Brain microvascular endothelial cell (primary cell): ENCODE measurements at regions of chr1 and their contacts with region 1.

Region 1: GRCh38 chr1:84936116-84936810 is 43.3 kb upstream of the LPAR3 start:
- DNase-seq: peak; percentile 50
- H3K4me3 ChIP-seq: no peak overlapping the region
- H3K27ac ChIP-seq: no peak overlapping the region
- H3K27me3 ChIP-seq: peaks cover 2% of the 10 kb centered on the region
- CTCF ChIP-seq: peak; percentile 81

Region 2: GRCh38 chr1:84758968-84759491 is 177.2 kb before region 1 on chr1:
- in situ Hi-C with region 1: no loop called
- DNase-seq: peak; percentile 55
- H3K4me3 ChIP-seq: peak overlapping the region; percentile 29
- H3K27ac ChIP-seq: no peak overlapping the region
- H3K27me3 ChIP-seq: peaks cover 10% of the 10 kb centered on the region
- CTCF ChIP-seq: no peak

Region 3: DNA sequence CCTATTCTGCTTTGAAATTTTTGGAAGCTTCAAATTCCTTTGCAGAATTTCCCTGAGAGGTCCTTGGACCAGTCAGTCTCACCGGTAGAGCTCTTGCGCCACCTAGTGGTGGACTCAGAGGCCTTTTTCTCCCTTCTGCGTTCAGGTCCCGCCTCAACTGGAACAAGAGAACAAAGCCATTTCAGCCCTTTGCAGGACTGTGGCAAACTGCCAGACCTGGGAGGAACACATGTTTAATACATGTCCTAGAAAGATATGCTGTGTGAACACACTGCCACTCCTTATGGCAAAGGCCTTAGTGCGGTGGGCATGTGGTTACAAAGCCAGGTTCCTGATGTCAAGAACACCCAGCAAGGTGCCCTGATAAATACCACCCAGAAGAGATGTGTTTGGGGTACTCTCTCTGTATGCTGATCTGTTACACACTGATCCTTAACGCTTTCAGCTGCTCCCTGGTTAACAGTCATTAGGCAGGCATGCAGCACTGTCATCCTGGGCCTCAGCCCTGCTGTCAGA is 163.8 kb before region 1 on chr1:
- in situ Hi-C with region 1: loop called (anchors 10 kb)
- DNase-seq: peak; percentile 74
- H3K4me3 ChIP-seq: no peak overlapping the region
- H3K27ac ChIP-seq: no peak overlapping the region
- H3K27me3 ChIP-seq: peaks cover 12% of the 10 kb centered on the region
- CTCF ChIP-seq: peak; percentile 96